ENCODE measurements at regions of chr2 and their contacts with region 1.

Region 1: DNA sequence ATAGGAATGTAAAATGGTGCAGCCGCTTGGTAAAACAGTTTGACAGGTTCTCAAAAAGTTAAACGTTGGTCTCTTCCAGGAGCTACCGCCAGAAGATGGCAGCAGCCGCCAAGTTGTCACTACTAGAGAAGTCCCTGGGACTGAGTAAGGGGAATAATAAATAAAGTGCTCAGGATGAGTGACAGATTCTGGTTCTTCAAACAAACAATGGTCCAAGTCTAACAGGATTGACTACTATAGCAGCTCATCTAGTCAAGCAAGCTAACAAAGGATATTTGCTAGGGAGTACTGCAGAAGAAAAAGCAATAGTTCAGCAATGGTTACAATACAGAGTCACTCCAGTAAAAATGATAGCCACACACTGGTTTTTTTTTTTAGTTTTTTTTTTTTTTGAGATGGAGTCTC is 3.8 kb upstream of the ANAPC1 start:
- DNase-seq: peak; percentile 19 to 71 (median 51)
- ATAC-seq: peak in 1 of 4 experiments; percentile 20
- H3K4me3 ChIP-seq: no peak overlapping the region
- H3K4me3 Mint-ChIP-seq: no peak overlapping the region
- H3K27ac ChIP-seq: no peak overlapping the region
- H3K27ac Mint-ChIP-seq: no peak overlapping the region
- H3K4me1 ChIP-seq: peaks cover 2 to 14% of the 10 kb centered on the region in 2 experiments
- H3K4me1 Mint-ChIP-seq: peaks cover 5 to 12% (median 11%) of the 10 kb centered on the region in 3 donors
- H3K27me3 ChIP-seq: no peaks in the 10 kb centered on the region
- H3K27me3 Mint-ChIP-seq: no peaks in the 10 kb centered on the region

Region 2: DNA sequence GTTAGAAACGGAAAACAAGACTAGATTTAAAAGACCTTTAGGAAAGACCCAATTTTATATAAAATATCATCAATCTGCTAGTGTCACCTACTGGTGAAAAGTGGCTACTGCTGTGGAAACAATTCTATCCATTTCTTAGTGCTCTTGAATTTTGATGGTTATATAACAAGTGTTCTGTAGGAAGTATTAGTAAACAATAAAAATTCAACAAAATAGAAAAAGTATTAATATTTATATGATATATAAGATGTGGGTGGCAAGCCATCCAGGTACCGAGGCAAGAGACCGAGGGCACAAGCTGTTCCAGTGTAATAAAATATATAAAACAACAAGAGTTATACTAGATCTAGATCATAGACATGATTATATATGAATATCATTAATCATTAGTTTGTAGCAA is 161.1 kb after region 1 on chr2:
- CTCF ChIA-PET with region 1: interaction called, 5 to 17 read pairs
- POLR2A ChIA-PET with region 1: no interaction called
- DNase-seq: peak in 12 of 35 experiments; percentile 10 to 74 (median 23)
- ATAC-seq: peak in 3 of 4 experiments; percentile 45 to 85 (median 69)
- H3K4me3 ChIP-seq: no peak overlapping the region
- H3K4me3 Mint-ChIP-seq: no peak overlapping the region
- H3K27ac ChIP-seq: no peak overlapping the region
- H3K27ac Mint-ChIP-seq: no peak overlapping the region
- H3K4me1 ChIP-seq: peaks cover 4% of the 10 kb centered on the region in 2 experiments
- H3K4me1 Mint-ChIP-seq: peaks cover 7 to 20% (median 7%) of the 10 kb centered on the region in 3 donors
- H3K27me3 ChIP-seq: peaks cover 0 to 5% of the 10 kb centered on the region in 2 experiments
- H3K27me3 Mint-ChIP-seq: no peaks in the 10 kb centered on the region

Region 3: GRCh38 chr2:112253261-112253815 is 365.5 kb after region 1 on chr2:
- CTCF ChIA-PET with region 1: interaction called in 1 of 2 experiments, 10 read pairs
- POLR2A ChIA-PET with region 1: no interaction called
- DNase-seq: no peak
- ATAC-seq: no peak
- H3K4me3 ChIP-seq: no peak overlapping the region
- H3K4me3 Mint-ChIP-seq: peak overlapping the region in 2 of 3 donors; percentile 51 to 87
- H3K27ac ChIP-seq: no peak overlapping the region
- H3K27ac Mint-ChIP-seq: no peak overlapping the region
- H3K4me1 ChIP-seq: peaks cover 17 to 25% of the 10 kb centered on the region in 2 experiments
- H3K4me1 Mint-ChIP-seq: peaks cover 0 to 20% (median 0%) of the 10 kb centered on the region in 3 donors
- H3K27me3 ChIP-seq: no peaks in the 10 kb centered on the region
- H3K27me3 Mint-ChIP-seq: no peaks in the 10 kb centered on the region

Measured in T-cell (primary cell).